MCF 10A (cell line): ENCODE measurements at regions of chr6 and their contacts with region 1.

Region 1: DNA sequence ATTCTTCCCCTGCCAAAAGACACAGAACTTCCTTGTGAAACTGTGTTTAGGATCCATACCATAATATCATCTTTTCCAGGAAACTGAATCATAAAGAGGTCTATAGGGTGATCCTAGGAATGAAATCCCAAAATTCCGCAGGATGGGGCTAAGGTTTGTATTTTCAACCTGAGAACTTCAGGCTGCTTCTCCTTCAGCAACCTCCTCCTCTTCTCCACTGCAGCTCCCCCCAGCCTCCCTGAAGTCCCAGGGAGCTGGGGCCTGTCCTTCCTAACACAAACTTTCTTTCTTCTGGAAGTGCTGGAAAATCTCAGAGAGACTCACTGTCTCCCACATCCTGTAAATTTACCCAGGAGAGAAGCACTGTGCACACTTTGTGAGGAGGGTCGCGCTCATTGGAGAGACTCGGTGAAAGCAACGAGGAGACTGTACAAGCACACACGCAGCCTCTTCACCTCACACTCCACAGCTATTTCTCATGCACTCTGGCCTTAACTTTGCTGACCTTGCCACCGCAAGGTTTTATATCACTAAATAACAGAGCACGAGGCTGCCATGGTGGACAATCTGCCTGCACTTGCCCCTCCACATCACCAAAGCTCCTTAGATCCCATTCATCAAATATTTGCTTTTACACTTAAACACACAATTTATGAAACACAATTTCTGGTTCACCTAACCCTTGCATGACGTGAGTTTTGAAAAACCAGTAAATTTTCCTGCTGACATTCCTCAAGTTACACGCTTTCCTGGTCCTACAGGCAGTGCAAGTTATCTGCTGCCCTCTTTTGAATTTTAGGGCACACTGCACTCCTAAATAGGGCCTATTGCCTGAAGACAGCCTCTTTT is 14.3 kb downstream of the ID4 start:
- DNase-seq: peak; percentile 66
- H3K4me3 Mint-ChIP-seq: no peak overlapping the region
- H3K27ac Mint-ChIP-seq: no peak overlapping the region
- H3K4me1 Mint-ChIP-seq: peaks cover 4% of the 10 kb centered on the region
- H3K27me3 Mint-ChIP-seq: peaks cover 10% of the 10 kb centered on the region
- CTCF ChIP-seq: peak; percentile 76

Region 2: GRCh38 chr6:18752278-18753068 is 1099.0 kb before region 1 on chr6:
- CTCF ChIA-PET with region 1: interaction called, 14 read pairs
- POLR2A ChIA-PET with region 1: no interaction called
- intact Hi-C with region 1: no loop called
- DNase-seq: no peak
- H3K4me3 Mint-ChIP-seq: no peak overlapping the region
- H3K27ac Mint-ChIP-seq: no peak overlapping the region
- H3K4me1 Mint-ChIP-seq: peaks cover 17% of the 10 kb centered on the region
- H3K27me3 Mint-ChIP-seq: peaks cover 61% of the 10 kb centered on the region
- CTCF ChIP-seq: no peak

Region 3: GRCh38 chr6:19024737-19025136 is 826.7 kb before region 1 on chr6:
- CTCF ChIA-PET with region 1: interaction called, 38 read pairs
- POLR2A ChIA-PET with region 1: interaction called, 3 read pairs
- intact Hi-C with region 1: loop called (anchors 1 kb)
- DNase-seq: peak; percentile 66
- H3K4me3 Mint-ChIP-seq: no peak overlapping the region
- H3K27ac Mint-ChIP-seq: no peak overlapping the region
- H3K4me1 Mint-ChIP-seq: no peaks in the 10 kb centered on the region
- H3K27me3 Mint-ChIP-seq: no peaks in the 10 kb centered on the region
- CTCF ChIP-seq: peak; percentile 65

Region 4: DNA sequence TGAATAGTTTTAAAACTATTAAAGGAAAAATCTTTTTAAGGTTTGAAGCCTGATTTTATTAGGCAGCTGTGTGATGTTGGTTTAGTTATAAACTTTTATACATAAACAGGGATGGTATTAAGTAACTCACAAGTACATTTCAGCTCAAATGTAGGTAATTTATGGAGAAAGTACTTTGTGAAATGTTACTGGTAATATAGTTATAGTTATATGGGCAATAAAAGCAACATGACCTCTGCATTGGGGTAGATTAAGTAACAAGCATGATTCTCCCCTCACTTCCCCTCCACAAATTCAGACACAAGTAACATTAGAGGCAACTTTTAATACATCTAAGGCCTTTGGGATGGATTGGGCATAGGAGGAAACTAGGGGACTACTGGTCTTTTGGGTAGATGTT is 168.6 kb before region 1 on chr6:
- CTCF ChIA-PET with region 1: no interaction called
- POLR2A ChIA-PET with region 1: no interaction called
- intact Hi-C with region 1: no loop called
- DNase-seq: no peak
- H3K4me3 Mint-ChIP-seq: no peak overlapping the region
- H3K27ac Mint-ChIP-seq: no peak overlapping the region
- H3K4me1 Mint-ChIP-seq: no peaks in the 10 kb centered on the region
- H3K27me3 Mint-ChIP-seq: peaks cover 15% of the 10 kb centered on the region
- CTCF ChIP-seq: no peak

Region 5: GRCh38 chr6:19812512-19813119 is 38.8 kb before region 1 on chr6:
- CTCF ChIA-PET with region 1: interaction called, 3 read pairs
- POLR2A ChIA-PET with region 1: no interaction called
- intact Hi-C with region 1: loop called (anchors 2 kb)
- DNase-seq: peak; percentile 36
- H3K4me3 Mint-ChIP-seq: no peak overlapping the region
- H3K27ac Mint-ChIP-seq: no peak overlapping the region
- H3K4me1 Mint-ChIP-seq: no peaks in the 10 kb centered on the region
- H3K27me3 Mint-ChIP-seq: peaks cover 70% of the 10 kb centered on the region
- CTCF ChIP-seq: peak; percentile 51

Region 6: DNA sequence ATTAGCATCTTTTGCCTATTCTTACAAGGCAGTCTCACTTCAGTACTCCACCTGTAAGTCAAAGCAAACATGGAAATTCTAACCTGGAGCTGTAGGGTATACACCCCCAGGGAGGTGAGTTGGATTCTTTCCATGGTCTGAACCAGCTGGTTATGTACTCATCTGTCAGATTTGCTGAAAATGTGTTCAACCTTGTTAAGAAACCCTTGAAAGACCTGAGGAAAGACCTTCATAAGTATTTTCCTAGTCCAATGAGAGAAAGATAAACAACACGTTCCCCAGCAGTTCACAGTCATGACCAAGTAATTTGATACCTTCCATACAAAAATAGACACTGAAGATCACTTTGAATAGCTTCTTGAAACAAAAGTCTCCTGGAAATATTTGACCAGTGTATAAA is 28.2 kb after region 1 on chr6:
- CTCF ChIA-PET with region 1: no interaction called
- POLR2A ChIA-PET with region 1: no interaction called
- intact Hi-C with region 1: no loop called
- DNase-seq: no peak
- H3K4me3 Mint-ChIP-seq: no peak overlapping the region
- H3K27ac Mint-ChIP-seq: no peak overlapping the region
- H3K4me1 Mint-ChIP-seq: no peaks in the 10 kb centered on the region
- H3K27me3 Mint-ChIP-seq: peaks cover 12% of the 10 kb centered on the region
- CTCF ChIP-seq: no peak

Region 7: GRCh38 chr6:20092071-20092566 is 240.7 kb after region 1 on chr6:
- CTCF ChIA-PET with region 1: no interaction called
- POLR2A ChIA-PET with region 1: no interaction called
- intact Hi-C with region 1: no loop called
- DNase-seq: peak; percentile 45
- H3K4me3 Mint-ChIP-seq: no peak overlapping the region
- H3K27ac Mint-ChIP-seq: no peak overlapping the region
- H3K4me1 Mint-ChIP-seq: no peaks in the 10 kb centered on the region
- H3K27me3 Mint-ChIP-seq: no peaks in the 10 kb centered on the region
- CTCF ChIP-seq: peak; percentile 51